PC-9 (cell line): ENCODE measurements at regions of chr5 and their contacts with region 1.

Region 1: DNA sequence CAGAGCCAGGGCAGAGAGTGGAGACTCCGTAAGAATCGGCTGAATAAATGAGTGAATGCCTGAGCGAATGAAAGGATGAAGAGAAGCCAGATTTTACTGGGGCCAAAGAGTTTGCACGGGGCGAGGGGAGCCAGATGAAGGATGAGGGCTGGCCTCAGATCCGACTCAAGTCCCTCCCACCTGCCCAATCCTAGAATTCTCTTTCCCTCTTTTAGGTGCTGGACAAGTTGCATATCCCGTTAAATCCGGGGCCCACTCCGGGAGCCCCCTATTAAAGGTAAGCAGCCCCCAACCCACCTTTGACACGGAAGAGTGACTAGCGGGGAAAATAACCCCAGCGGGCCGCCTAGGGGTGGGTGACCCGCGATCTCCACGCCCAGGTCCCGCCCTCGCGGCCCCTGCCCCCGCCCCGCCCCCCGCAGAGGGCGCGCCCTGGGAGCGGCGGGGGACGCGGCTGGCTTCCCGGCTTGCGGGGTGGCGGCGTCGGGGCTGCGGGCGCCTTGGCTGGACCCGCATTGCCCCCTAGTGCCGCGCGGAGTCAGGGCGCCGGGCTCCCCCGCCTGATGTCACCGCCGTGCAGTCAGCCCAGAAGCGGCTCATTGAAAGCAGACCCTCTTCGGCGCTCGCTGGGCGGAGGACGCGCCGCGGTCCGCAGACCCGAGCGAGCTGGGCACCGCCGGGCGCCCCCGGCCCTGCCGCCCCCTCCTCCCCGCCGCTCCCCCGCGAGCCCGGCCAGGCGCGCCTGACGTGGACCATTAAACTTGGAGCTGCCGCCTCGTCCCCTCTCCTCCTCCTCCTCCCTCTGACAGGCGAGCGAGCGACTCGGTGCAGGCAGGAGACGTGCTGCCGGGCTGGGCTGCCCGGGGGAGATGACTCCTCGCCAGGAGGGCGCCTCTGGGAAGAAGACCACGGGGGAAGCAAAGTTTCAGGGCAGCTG is at the start of gene ADRA1B:
- DNase-seq: peak; percentile 45 to 87
- H3K4me3 ChIP-seq: peak within 1 kb of the TSS; percentile 64
- H3K27ac ChIP-seq: peak within 1 kb of the TSS; percentile 100
- H3K4me1 ChIP-seq: peaks cover 94% of the 10 kb centered on the region
- H3K27me3 ChIP-seq: no peaks in the 10 kb centered on the region
- CTCF ChIP-seq: peak; percentile 51
- total RNA-seq, gene ADRA1B: 4.6 and 6.0 TPM in 2 replicates

Region 2: DNA sequence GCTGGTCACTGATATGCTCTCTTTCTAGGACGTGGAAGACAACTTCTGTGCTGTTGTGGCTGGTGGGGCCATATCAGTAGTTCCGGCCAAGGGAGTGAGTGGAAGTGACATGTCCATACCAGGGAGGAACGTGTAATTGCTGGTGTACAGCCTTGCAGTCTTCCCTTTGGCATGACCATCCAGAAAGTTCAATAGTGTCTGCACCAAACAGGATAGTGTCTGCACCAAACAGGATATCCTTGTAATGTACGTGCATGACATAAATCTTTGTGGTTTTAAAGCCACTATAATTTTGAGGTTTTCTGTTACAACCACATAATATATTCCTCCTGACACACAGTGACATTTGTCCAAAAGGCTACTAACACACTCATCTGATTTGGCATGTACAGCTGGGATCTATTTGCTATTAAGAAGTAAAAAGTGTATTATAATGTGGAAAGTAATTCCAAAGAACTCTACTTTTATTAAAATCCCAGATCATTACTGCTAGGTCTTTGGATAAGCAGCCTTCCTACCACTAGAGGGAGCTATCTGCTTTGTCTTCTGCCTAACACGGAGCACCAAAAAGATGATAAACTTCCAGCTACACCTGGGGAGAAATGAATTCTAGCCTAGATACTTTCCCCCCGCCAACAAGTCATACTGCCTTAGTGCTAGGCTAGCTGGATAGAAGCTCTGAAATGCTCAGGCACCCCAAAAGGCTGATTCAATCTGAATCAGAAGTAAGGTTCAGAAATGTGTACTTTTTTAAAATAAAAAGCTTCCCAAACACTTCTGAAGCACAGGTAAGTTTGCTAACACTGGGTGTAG is 759.5 kb before region 1 on chr5:
- CTCF ChIA-PET with region 1: no interaction called
- POLR2A ChIA-PET with region 1: no interaction called
- intact Hi-C with region 1: loop called (anchors 2 kb)
- DNase-seq: peak; percentile 38 to 42
- H3K4me3 ChIP-seq: no peak overlapping the region
- H3K27ac ChIP-seq: peak overlapping the region; percentile 25; the same call in 1 of the 2 replicates
- H3K4me1 ChIP-seq: no peaks in the 10 kb centered on the region
- H3K27me3 ChIP-seq: no peaks in the 10 kb centered on the region
- CTCF ChIP-seq: peak; percentile 92

Region 3: DNA sequence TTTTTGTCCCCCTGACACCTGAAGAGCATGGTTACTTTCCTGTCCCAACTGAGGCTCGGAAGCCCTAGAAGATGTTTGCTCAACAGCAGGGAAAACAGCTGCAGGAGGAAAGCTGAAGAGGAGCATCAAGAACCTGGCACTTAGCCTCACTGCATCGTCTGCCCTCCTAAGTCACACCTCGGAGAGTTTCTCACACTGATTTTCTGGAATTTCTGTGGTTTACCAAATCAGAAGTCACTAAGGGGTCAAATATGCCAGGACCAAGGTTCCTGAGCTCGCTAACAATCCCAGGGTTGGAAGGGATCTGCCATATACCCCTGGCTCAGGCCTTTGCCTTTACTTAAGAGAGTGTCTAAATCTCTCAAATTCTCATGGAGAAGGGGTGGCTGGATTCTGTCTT is 591.2 kb before region 1 on chr5:
- CTCF ChIA-PET with region 1: no interaction called
- POLR2A ChIA-PET with region 1: interaction called, 15 read pairs
- intact Hi-C with region 1: no loop called
- DNase-seq: no peak
- H3K4me3 ChIP-seq: no peak overlapping the region
- H3K27ac ChIP-seq: no peak overlapping the region
- H3K4me1 ChIP-seq: no peaks in the 10 kb centered on the region
- H3K27me3 ChIP-seq: peaks cover 17% of the 10 kb centered on the region
- CTCF ChIP-seq: no peak

Region 4: DNA sequence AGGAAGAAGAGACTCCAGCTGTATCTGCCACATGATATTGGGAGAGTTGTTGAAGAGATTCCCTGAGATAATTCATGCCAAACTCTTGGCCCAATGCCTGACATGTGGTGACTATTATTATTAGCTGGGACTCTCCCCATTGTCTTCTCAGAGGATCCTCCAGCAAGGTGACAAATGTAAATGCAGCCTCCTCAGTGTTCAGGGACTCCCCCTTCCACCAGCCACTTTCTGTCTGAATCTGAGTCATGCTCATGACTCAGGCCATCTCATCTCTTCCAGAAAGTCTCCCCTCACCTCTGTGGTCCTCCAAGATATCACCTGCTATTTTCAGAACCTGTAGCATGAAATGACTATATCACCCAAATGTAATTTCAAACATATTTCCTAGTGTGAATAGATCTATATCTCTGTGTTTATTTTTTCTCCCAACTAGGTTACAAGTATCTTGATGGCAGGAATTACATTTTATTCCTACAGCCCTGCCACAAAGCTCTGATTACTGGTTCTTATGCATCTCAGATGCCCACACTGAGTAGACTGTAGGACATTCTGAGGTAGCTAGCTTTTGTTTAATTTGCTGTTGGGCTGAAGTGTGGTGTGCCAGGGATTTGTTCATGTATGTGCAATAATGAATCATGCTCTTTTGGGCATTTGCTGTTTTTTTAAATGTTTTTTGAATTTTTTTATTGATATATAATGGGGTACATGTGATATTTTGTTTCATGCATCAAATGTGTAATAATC is 459.3 kb before region 1 on chr5:
- CTCF ChIA-PET with region 1: no interaction called
- POLR2A ChIA-PET with region 1: interaction called, 9 read pairs
- intact Hi-C with region 1: loop called (anchors 5 kb)
- DNase-seq: peak; percentile 54 to 63
- H3K4me3 ChIP-seq: no peak overlapping the region
- H3K27ac ChIP-seq: peak overlapping the region; percentile 42; the same call in 1 of the 2 replicates
- H3K4me1 ChIP-seq: peaks cover 29% of the 10 kb centered on the region
- H3K27me3 ChIP-seq: no peaks in the 10 kb centered on the region
- CTCF ChIP-seq: no peak

Region 5: DNA sequence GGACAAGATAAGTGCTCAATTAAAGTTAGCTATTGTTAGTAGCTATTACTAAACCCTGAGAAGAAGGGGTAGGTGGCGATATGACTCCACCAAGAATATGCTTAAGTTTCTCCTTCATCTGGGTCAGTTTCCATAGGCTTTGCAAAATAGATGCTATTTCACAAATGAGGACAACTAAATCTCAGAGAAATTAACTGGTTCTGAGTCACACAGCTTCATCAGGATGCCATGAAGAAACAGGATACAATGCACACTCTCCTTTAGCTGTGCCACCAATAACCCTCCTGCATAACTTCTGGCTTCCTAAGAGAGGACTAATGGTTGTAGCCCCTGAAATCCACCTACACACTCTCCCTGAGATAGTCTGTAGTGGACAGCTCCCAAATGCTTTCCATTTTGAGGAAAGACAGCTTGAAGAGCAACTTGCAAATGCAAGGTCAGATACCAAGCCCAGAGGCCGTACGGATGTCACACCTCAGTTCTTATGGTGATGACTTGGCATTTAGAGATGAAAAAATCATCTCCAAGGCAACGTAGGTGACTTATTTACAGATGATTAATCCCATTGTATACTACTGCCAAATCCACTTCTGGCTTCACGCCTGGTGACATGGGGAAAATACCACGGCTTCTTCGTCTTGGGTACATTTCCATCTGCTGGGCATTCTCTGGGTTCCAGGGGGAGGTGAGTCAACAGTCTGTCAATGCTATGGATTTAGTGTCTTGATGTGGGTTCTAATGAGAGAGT is 334.5 kb before region 1 on chr5:
- CTCF ChIA-PET with region 1: interaction called, 10 read pairs
- POLR2A ChIA-PET with region 1: interaction called, 11 read pairs
- intact Hi-C with region 1: loop called (anchors 1 kb)
- DNase-seq: peak; percentile 92 to 99
- H3K4me3 ChIP-seq: no peak overlapping the region
- H3K27ac ChIP-seq: peak overlapping the region; percentile 98
- H3K4me1 ChIP-seq: peaks cover 50% of the 10 kb centered on the region
- H3K27me3 ChIP-seq: no peaks in the 10 kb centered on the region
- CTCF ChIP-seq: peak; percentile 36

Region 6: GRCh38 chr5:159826351-159827214 is 89.6 kb before region 1 on chr5:
- CTCF ChIA-PET with region 1: interaction called, 6 read pairs
- POLR2A ChIA-PET with region 1: no interaction called
- intact Hi-C with region 1: loop called (anchors 1 kb)
- DNase-seq: peak; percentile 84 to 99
- H3K4me3 ChIP-seq: no peak overlapping the region
- H3K27ac ChIP-seq: peak overlapping the region; percentile 99
- H3K4me1 ChIP-seq: peaks cover 64% of the 10 kb centered on the region
- H3K27me3 ChIP-seq: no peaks in the 10 kb centered on the region
- CTCF ChIP-seq: no peak

Region 7: DNA sequence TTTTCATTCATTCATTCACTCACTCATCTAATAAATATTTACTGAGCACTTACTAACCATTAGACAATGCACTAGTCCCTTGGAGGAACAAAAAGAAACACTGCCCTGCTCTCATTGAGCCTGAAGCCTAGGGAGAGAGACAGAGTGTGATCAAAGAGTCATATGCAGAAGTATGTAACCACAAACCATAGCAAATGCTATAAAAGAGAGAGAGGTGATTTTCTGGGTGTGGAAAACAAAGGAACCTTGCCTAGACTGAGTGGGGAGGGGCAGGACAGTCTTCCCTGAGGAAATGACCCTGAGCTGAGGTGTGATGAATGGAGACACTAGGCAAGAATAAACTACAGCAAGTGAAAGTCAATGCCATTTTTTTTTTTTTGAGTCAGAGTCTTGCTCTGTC is 10.7 kb before region 1 on chr5:
- CTCF ChIA-PET with region 1: no interaction called
- POLR2A ChIA-PET with region 1: no interaction called
- intact Hi-C with region 1: loop called (anchors 1 kb)
- DNase-seq: peak; percentile 89 to 99
- H3K4me3 ChIP-seq: no peak overlapping the region
- H3K27ac ChIP-seq: peak overlapping the region; percentile 97
- H3K4me1 ChIP-seq: peaks cover 87% of the 10 kb centered on the region
- H3K27me3 ChIP-seq: no peaks in the 10 kb centered on the region
- CTCF ChIP-seq: no peak